Tibial artery (tissue), 4 donors: ENCODE measurements at regions of chr3 and their contacts with region 1.

Region 1: DNA sequence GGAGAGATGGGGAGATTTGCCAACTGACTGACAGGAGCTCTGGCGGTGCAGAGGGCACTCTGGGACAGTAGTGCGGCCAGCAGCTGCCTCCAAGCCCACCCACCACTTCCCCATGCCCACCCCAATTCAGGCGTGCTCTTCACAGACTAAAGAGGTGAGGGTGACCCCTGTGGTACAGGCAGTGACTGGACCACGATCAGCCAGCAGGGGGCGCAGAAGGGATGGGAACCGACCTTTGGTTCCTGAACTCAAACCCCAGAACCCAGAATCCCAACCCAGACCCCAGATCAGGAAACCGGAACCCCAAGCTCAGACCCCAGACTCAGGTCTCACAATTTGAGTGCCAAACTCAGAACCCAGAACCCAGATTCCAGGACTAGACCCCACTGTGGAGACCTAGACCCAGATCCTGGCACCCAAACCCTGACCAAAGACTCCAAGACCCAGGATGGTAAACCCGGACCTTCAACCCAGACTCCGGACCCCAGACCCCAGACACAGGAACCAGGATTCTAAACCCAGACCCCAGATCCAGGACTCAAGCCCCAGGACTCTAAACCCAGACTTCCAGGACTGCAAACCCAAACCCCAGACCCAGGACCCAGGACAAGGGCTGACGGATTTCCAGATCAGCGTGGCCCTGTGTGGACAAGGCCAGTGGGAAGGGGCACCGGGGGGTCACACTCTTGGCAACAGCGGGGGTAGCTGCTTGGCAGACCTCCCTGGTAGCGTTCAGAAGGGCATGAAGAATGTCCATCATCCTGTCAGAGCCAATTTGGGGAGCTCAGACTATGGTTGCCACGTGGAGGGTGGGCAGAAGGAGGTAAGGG is 3.7 kb upstream of the MYL3 start:
- DNase-seq: peak; percentile 82 to 89
- H3K4me3 ChIP-seq: no peak overlapping the region
- H3K27ac ChIP-seq: peak overlapping the region; percentile 84 to 88
- H3K4me1 ChIP-seq: peaks cover 4 to 67% (median 61%) of the 10 kb centered on the region in 4 donors
- H3K27me3 ChIP-seq: no peaks in the 10 kb centered on the region
- CTCF ChIP-seq: peak; percentile 94

Region 2: GRCh38 chr3:46895204-46895660 is 28.3 kb after region 1 on chr3:
- intact Hi-C with region 1: loop called (anchors 2 kb)
- DNase-seq: peak; percentile 72 to 79
- H3K4me3 ChIP-seq: no peak overlapping the region
- H3K27ac ChIP-seq: no peak overlapping the region
- H3K4me1 ChIP-seq: peaks cover 0 to 55% (median 48%) of the 10 kb centered on the region in 4 donors
- H3K27me3 ChIP-seq: no peaks in the 10 kb centered on the region
- CTCF ChIP-seq: peak; percentile 89 to 94

Region 3: DNA sequence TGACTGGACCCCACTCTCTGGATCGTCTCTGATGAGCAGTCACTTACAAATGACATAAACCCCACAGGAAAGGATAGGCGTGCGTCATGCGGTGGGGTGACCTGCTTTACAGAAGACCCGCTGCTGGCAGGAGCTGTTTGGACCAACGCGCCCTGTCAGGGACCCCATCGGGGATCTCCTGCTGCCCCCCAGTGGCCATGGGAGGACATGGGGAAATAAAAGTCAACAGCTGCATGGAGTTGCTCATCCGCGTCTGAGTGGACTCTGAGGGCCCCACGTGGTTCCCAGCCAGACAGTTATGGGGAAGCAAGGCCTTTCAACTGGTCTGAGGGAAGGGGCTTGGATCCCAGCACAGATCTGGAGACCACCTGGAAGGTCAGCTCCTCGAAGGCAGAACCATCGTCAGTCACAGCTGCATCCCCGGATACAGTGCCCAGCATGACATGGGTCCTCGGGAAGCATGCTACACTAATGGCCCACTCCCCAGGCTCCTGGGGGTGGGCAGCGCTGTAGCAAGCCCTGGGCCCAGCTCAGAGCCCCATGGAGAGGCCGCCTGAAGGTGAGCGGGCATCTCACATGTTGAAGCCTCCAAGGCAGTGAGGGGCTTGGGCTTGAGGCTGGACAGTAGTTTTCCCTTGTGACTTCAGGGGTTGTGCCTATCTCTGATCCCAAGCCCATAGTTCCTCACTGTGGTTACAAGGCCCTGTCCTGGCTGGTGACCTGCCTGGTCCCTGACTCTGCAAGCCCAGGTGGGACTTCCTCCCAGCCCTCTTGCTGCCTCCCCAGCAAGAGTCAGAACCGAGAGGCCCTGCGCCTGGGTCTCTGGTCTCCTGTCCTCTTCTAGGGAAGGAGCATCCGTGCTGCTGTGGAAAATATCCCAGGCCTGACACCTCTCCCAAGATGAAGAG is 42.9 kb after region 1 on chr3:
- intact Hi-C with region 1: loop called (anchors 5 kb)
- DNase-seq: peak; percentile 85 to 93
- H3K4me3 ChIP-seq: peak overlapping the region in 1 of 2 donors; percentile 13
- H3K27ac ChIP-seq: peak overlapping the region; percentile 63 to 72
- H3K4me1 ChIP-seq: peaks cover 6 to 37% (median 23%) of the 10 kb centered on the region in 4 donors
- H3K27me3 ChIP-seq: no peaks in the 10 kb centered on the region
- CTCF ChIP-seq: peak; percentile 84 to 95